BJ (cell line): ENCODE measurements at regions of chr22 and their contacts with region 1.

Region 1: GRCh38 chr22:41589391-41590241 is at the start of gene PMM1:
- DNase-seq: peak; percentile 97
- H3K4me3 ChIP-seq: peak within 1 kb of the TSS; percentile 95
- H3K27me3 ChIP-seq: no peaks in the 10 kb centered on the region
- CTCF ChIP-seq: no peak
- polyA plus RNA-seq, gene PMM1: 70.7 and 109 TPM in 2 replicates

Region 2: DNA sequence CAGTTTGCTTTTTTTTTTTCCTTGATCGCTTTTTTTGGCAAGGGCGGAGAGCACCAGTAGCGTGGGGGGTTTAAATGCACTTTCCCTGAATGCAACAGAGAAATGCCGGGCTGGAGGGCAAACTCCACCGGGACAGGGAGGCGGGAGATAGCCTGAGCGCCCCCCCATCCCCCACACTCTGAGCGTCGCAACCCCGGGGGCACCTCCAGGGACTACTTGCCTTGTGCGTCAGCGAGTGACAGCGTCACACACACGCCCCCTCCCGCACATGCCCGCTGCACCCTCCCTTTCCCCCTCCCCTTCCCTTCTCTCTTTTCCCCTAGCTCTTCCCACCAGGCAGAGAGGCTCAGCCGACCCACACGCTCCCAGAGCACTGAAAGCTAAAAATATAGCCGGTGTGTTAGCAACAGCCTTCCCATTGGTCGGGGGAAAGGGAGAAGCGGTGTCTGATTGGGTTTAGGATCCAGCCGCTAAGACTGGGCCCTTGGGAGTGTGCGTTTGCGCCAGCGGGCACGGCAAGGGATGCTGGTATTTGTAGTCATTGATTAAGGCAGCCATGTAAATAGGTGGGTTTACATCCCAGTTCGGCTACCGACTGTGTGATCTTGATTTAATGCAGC is 141.3 kb before region 1 on chr22:
- CTCF ChIA-PET with region 1: no interaction called
- POLR2A ChIA-PET with region 1: interaction called, 11 read pairs
- DNase-seq: peak; percentile 99
- H3K4me3 ChIP-seq: peak overlapping the region; percentile 98
- H3K27me3 ChIP-seq: no peaks in the 10 kb centered on the region
- CTCF ChIP-seq: no peak

Region 3: GRCh38 chr22:41532908-41533825 is 56.4 kb before region 1 on chr22:
- CTCF ChIA-PET with region 1: no interaction called
- POLR2A ChIA-PET with region 1: no interaction called
- DNase-seq: no peak
- H3K4me3 ChIP-seq: no peak overlapping the region
- H3K27me3 ChIP-seq: no peaks in the 10 kb centered on the region
- CTCF ChIP-seq: peak; percentile 88